ENCODE measurements at regions of chr7 and their contacts with region 1.

Region 1: DNA sequence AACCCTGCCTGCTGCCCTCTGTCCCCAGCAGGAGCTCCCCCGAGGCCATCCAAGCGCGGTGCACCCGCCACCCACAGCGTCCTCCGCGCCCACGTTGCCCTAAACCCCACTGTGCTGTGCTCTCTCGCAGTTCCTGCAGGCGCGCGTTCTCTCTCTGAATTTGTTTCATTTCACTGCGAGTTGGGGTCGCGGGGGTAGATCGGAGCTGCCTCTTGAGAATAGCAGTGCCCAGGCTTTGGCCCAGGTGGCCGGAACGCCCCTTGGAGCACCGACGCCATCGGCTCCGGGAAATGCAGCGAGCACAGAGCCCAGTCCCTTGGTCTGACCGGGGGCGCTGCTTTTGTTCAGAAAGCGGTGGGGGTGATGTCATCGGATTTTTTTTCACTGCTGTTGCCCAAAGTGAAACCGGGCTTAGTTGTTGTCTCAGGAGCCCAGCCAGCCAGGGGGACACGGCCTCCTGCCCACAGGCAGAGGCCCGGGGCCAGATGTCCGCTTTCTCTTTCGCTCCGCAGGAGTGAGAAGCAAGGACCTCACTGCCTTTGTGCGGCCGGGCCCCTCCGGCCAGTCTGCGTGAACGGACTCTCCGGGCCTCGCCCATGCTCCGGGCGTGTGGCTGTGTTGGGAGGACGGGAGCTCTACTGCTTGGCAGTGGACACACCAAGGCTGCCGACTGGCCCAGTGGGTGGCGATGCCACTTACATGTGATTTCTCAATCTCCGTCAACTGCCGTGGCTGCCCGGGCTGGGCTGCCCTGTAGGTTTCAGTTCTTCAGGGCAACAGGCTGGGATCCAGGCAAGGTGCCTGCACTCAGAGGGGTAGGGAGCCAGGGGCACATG is 43.1 kb downstream of the FOXK1 start:
- DNase-seq: peak; percentile 72 to 88
- H3K4me3 ChIP-seq: peak overlapping the region; percentile 42; the same call in 1 of the 2 replicates
- H3K27ac ChIP-seq: peak overlapping the region; percentile 50
- H3K4me1 ChIP-seq: 0 out of 2 replicates have a peak, but pooled peaks cover 5% of the 10 kb centered on the region
- H3K27me3 ChIP-seq: no peaks in the 10 kb centered on the region
- CTCF ChIP-seq: no peak

Region 2: GRCh38 chr7:4641667-4642467 is 83.4 kb before region 1 on chr7:
- CTCF ChIA-PET with region 1: no interaction called
- POLR2A ChIA-PET with region 1: no interaction called
- intact Hi-C with region 1: loop called (anchors 1 kb)
- DNase-seq: peak; percentile 84 to 99
- H3K4me3 ChIP-seq: peak overlapping the region; percentile 69
- H3K27ac ChIP-seq: peak overlapping the region; percentile 92
- H3K4me1 ChIP-seq: peaks cover 6% of the 10 kb centered on the region
- H3K27me3 ChIP-seq: no peaks in the 10 kb centered on the region
- CTCF ChIP-seq: no peak; the same call in 1 of the 2 replicates

Region 3: DNA sequence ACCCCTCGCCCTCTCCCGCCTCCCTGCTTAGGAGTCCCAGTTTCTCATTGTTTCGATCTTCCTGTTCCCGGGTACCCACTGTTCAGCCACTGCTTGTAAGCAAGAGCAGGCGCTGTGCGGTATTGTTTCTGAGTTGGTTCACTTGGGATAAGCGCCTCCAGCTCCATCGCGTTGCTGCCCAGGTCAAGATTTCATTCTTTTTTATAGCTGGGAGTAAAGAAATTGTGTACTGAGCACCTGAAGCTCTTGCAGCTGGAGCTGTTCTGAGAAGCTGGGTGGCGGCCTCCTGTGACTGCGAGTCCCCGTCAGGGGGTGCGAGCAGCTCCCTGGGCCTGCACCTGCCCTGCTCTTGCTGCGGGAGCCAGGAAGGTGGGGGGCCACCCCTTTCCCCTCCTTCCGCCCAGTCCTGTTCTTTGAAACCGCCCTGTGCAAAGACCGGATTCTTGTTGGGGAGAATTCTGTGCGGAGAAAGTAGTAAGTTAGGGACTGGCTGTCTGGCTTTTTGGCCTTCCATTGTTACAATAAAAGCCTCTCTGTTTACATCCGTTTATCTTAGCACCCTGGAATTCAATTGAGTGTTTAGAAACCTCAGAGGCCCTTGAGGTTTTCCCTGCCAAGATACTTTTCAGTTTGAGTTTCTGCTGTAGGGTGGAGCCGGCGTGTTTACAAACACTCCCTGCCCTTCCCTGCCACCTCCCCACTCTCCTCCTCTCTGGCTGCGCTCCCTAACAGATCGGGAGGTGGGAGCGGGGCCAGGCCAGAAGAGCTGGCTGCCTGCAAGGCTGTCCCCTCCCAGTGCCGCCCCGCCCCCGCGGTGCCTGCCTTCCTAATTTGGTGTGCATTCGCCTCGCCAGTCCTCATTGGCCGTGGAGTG is 19.4 kb after region 1 on chr7:
- CTCF ChIA-PET with region 1: no interaction called
- POLR2A ChIA-PET with region 1: interaction called, 5 read pairs
- intact Hi-C with region 1: loop called (anchors 1 kb)
- DNase-seq: peak; percentile 98 to 100
- H3K4me3 ChIP-seq: peak overlapping the region; percentile 30; the same call in 1 of the 2 replicates
- H3K27ac ChIP-seq: peak overlapping the region; percentile 93
- H3K4me1 ChIP-seq: peaks cover 37% of the 10 kb centered on the region
- H3K27me3 ChIP-seq: no peaks in the 10 kb centered on the region
- CTCF ChIP-seq: no peak

Region 4: GRCh38 chr7:5514440-5515035 is 789.3 kb after region 1 on chr7:
- CTCF ChIA-PET with region 1: no interaction called
- POLR2A ChIA-PET with region 1: no interaction called
- intact Hi-C with region 1: no loop called
- DNase-seq: peak; percentile 29 to 81
- H3K4me3 ChIP-seq: peak overlapping the region; percentile 90
- H3K27ac ChIP-seq: peak overlapping the region; percentile 97
- H3K4me1 ChIP-seq: peaks cover 36% of the 10 kb centered on the region
- H3K27me3 ChIP-seq: no peaks in the 10 kb centered on the region
- CTCF ChIP-seq: no peak; the same call in 1 of the 2 replicates